B cell (primary cell): ENCODE measurements at regions of chr16 and their contacts with region 1.

Region 1: GRCh38 chr16:48164907-48165726 is 9.3 kb upstream of the ABCC12 start:
- DNase-seq: peak; percentile 75
- ATAC-seq: peak; percentile 90
- H3K4me3 ChIP-seq: no peak overlapping the region
- H3K4me3 Mint-ChIP-seq: no peak overlapping the region
- H3K27ac ChIP-seq: no peak overlapping the region
- H3K27ac Mint-ChIP-seq: peak overlapping the region; percentile 27
- H3K4me1 ChIP-seq: peaks cover 0 to 2% of the 10 kb centered on the region in 2 donors
- H3K4me1 Mint-ChIP-seq: peaks cover 3% of the 10 kb centered on the region
- H3K27me3 ChIP-seq: no peaks in the 10 kb centered on the region
- H3K27me3 Mint-ChIP-seq: no peaks in the 10 kb centered on the region
- CTCF ChIP-seq: peak; percentile 90

Region 2: DNA sequence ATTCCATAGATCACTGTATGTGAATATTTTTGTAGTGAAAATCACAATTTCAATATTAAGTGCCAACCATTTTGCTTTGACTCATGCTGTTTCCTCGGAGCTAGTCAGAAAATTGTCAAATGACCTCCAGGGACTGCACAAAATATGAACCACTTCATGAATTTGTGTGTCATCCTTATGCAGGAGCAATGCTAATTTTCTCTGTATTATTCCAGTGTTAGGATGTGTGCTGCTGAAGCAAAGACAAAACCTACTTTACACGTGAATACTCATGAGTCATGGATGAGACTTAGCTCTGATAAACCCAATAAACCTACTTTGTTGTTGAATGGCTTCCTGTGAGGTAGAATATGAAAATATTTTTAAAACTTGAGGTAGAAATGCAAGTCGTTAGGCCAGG is 1609.2 kb before region 1 on chr16:
- CTCF ChIA-PET with region 1: interaction called, 11 read pairs
- POLR2A ChIA-PET with region 1: no interaction called
- intact Hi-C with region 1: no loop called
- DNase-seq: no peak
- ATAC-seq: no peak
- H3K4me3 ChIP-seq: no peak overlapping the region
- H3K4me3 Mint-ChIP-seq: no peak overlapping the region
- H3K27ac ChIP-seq: no peak overlapping the region
- H3K27ac Mint-ChIP-seq: no peak overlapping the region
- H3K4me1 ChIP-seq: no peaks in the 10 kb centered on the region
- H3K4me1 Mint-ChIP-seq: peaks cover 2% of the 10 kb centered on the region
- H3K27me3 ChIP-seq: no peaks in the 10 kb centered on the region
- H3K27me3 Mint-ChIP-seq: peaks cover 20% of the 10 kb centered on the region
- CTCF ChIP-seq: no peak

Region 3: DNA sequence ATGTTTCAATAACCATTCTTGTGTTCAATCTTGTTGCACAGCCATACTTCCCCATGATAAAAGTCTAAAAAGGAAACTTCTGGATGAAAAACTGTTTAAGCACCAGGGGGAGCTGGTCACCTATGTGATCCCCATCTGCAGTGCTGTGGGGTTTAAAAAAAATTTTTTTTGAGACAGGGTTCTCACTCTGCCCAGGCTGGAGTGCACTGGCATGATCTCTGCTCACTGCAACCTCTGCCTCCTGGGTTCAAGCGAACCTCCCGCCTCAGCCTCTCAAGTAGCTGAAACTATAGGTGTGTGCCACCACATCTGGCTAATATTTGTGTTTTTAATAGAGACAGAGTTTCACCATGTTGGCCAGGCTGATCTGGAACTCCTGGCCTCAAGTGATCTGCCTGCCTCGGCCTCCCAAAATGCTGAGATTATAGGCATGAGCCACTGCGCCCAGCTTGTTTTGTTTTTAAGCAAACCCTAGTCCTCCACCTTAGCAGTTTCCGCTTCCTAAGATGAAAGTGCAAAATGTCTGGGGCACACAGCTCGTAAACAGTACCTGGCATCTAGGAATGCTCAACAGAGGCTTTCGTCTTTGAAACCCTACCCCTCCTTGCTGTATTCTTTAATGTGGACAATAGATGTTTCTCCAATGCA is 1217.1 kb before region 1 on chr16:
- CTCF ChIA-PET with region 1: interaction called, 20 read pairs
- POLR2A ChIA-PET with region 1: no interaction called
- intact Hi-C with region 1: loop called (anchors 1 kb)
- DNase-seq: peak; percentile 68
- ATAC-seq: peak; percentile 63
- H3K4me3 ChIP-seq: no peak overlapping the region
- H3K4me3 Mint-ChIP-seq: no peak overlapping the region
- H3K27ac ChIP-seq: no peak overlapping the region
- H3K27ac Mint-ChIP-seq: no peak overlapping the region
- H3K4me1 ChIP-seq: peaks cover 0 to 3% of the 10 kb centered on the region in 2 donors
- H3K4me1 Mint-ChIP-seq: peaks cover 6% of the 10 kb centered on the region
- H3K27me3 ChIP-seq: no peaks in the 10 kb centered on the region
- H3K27me3 Mint-ChIP-seq: no peaks in the 10 kb centered on the region
- CTCF ChIP-seq: peak; percentile 75

Region 4: DNA sequence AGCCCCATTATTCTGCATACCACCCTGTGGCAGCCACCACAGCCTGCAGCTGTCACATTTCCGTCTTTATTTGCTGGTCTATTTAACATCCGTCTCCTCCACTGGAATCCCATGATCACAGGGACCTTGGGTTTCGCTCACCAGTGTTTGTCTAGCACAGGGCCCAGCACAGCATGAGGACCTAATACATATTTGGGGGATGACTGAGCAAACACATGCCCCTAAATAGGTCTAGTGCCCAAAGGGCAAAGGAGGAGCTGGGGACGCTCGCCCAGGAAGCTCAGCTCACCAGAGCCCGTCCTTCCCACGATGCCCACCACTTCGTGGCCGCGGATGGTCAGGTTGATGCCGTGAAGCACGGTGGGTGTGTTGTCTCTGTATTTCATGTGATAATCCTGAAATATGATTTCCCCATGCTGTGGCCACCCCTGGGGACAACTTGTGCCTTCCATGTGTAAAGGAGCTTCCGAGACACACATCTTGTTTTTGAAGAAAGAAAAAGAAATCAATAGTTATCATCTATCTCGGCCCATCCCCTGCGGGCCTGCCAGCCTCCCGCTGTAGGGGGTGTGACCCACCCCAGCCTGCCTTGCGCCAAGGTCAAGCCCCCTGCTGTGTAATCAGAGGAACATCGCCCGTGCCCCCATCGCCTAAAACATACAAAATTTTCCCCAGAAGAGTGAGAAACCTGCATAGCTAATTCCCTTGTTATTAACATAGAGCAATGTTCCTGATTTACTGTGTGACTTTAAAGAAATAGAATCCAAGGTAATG is 11.7 kb after region 1 on chr16:
- CTCF ChIA-PET with region 1: interaction called, 20 read pairs
- POLR2A ChIA-PET with region 1: no interaction called
- intact Hi-C with region 1: no loop called
- DNase-seq: no peak
- ATAC-seq: no peak
- H3K4me3 ChIP-seq: no peak overlapping the region
- H3K4me3 Mint-ChIP-seq: no peak overlapping the region
- H3K27ac ChIP-seq: no peak overlapping the region
- H3K27ac Mint-ChIP-seq: no peak overlapping the region
- H3K4me1 ChIP-seq: no peaks in the 10 kb centered on the region
- H3K4me1 Mint-ChIP-seq: no peaks in the 10 kb centered on the region
- H3K27me3 ChIP-seq: peaks cover 0 to 2% (median 0%) of the 10 kb centered on the region in 4 experiments
- H3K27me3 Mint-ChIP-seq: peaks cover 10% of the 10 kb centered on the region
- CTCF ChIP-seq: no peak